ENCODE measurements at regions of chr6 and their contacts with region 1.

Region 1: DNA sequence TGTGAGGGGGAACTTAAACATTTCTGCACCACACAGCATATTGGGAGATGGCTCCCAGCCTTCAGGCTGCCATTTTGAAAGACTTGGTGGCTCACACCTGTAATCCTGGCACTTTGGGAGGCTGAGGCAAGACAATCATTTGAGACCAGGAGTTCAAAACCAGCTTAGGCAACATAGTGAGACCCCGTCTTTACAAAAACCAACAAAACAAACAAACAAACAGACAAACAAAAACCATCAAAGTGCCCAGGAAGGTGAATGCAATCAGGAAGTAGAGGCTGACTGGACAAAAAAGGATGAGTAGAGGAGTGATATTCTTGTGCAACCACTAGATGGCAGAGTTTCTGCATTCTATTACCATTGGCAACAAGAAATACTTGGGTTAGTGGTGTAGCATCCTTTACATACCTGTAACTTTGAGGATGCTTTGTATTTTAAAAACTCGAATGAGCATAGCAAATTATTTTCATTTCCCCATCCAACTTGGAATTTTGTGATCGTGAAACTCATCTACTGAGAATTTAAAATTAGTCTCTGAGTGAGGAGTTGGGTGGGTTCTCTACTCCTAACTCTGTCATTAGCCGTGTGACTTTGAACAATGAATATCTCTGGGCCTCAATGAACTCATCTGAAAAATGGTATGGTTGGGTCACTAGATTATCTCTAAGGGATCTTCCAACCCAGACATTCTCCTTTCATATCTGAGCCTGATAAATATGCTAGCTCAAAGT is 84.4 kb downstream of the CRYBG1 start:
- DNase-seq: no peak
- ATAC-seq: peak; percentile 70 to 73

Region 2: DNA sequence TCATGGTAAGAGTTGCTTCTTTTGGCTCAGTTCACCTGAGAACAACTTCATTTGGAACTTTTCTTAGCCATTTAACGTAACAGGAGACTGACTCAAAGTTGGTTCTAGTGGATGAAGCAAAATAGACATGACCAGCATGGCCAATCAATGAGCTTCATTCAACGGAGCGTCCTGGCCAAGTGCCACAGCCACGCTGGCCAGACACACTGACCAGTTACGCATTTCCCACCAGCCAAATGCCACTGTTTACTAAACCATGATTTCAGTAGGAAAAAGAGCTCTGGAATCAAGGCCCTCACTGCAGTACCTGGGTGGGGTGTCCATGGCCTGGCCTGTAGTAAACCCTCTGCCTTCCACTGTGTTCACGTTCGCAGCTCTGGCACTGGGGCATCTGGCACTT is 1345.6 kb before region 1 on chr6:
- intact Hi-C with region 1: no loop called
- DNase-seq: no peak
- ATAC-seq: no peak

Region 3: DNA sequence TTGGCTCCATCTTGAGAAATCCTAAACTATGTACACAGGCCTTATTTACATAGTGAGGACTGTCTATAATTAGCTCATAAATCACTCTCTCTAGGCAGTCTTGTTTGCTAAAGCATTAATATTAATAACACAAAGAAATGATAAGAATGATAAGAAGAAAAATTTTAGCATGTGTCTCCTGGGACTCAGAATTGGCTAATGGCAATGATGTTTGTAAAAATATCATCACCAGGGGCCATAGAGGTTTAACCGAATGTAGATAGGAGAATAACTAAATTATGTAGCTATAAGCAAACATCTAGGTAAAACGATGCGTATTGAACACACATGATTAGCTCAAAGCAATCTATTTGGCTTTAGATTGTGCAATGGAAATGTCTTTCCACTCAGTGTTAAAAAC is 97.6 kb before region 1 on chr6:
- intact Hi-C with region 1: no loop called
- DNase-seq: no peak
- ATAC-seq: no peak

Region 4: GRCh38 chr6:106560996-106561685 is 116.2 kb after region 1 on chr6:
- intact Hi-C with region 1: loop called (anchors 2 to 5 kb)
- DNase-seq: no peak
- ATAC-seq: no peak

Region 5: DNA sequence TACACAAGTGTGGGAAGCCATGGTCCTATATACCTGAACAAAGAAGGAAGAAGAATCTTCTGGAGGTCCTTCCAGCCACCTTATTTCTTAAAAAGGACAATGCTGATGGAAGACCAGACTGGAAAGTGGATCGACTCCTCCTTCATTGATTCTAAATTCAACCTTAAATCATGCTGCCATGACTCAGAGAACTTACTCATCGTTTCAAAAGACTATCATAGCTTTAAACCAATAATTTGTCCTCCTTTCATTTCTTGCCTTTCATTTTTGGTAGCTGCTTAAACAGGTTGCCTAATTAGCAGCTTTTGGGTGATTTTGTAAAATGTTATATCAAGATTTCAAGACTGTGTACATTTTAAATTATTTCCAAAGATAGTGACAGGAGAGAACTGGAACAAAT is 123.6 kb after region 1 on chr6:
- intact Hi-C with region 1: loop called (anchors 2 to 5 kb)
- DNase-seq: no peak
- ATAC-seq: no peak

Region 6: DNA sequence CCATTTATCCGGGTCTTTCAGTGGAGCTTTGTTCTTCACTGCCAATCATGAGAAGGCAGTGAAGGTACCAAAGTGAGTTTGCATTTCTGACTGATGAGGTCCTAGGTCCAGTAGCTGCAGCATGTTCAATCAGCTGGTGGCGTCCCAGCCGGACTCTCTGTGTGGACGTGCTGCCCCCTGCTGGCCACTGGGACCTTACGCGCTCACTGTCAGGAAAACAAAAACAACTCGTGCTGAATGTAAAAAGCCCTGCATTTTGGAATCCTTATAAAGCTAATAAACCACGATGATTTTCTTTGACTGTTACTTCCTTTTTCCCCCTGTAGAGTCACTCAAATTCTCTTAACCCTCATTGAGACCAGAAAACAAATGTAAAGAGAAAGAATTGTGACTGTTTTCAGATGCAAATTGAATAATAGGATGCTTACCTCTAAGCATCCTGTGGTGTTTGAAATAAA is 534.5 kb after region 1 on chr6:
- intact Hi-C with region 1: loop called in 1 of 2 experiments (anchors 2 kb)
- DNase-seq: peak; percentile 87
- ATAC-seq: peak; percentile 58 to 87